Calu3 (cell line): ENCODE measurements at regions of chr3 and their contacts with region 1.

Region 1: DNA sequence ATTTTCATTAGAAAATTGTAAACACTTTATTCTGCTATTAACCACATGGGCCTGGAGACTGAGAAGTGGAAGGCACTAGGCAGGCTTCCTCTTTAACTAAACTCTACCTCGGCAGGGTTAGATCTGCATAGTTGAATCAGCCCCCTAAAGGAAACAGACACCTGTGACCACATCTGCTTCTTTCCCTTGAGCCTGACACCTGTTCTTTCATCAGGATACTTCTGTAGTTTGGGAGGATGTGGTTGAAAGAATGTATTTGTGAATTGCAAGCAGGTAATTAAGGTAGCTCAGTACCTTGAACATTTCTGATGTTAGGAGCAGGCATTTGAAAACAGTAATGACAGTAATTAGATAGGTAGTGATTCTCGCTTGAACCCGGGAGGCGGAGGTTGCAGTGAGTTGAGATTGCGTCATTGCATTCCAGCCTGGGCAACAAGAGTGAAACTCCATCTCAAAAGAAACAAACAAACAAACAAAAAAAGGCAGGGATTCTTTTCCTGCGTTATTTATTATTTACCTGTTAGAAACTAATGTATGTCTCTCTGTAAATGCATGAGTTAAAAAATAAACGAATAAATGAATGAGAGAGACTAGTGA is 468.5 kb downstream of the NLGN1 start:
- DNase-seq: no peak
- H3K4me3 Mint-ChIP-seq: no peak overlapping the region
- H3K27ac Mint-ChIP-seq: no peak overlapping the region
- H3K4me1 Mint-ChIP-seq: no peaks in the 10 kb centered on the region
- H3K27me3 Mint-ChIP-seq: no peaks in the 10 kb centered on the region
- CTCF ChIP-seq: no peak

Region 2: DNA sequence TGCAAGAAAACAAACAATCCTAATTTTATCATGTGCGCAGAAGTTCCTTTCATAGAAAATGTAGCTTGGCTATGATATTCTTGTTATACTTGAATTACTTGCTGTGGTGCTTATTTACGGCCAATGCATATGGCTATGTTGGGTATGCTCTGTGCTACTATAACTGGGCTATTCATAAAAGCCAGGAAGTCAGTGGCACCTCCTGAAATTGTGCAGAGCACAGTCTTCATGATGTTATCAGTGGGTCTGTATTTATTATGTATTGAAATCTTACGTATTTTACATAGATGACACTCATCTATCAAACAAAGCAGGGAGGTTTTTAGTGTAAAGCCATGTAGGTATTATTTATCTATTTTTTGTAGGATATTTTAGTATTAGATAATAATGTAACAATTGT is 796.7 kb after region 1 on chr3:
- CTCF ChIA-PET with region 1: no interaction called
- intact Hi-C with region 1: loop called (anchors 5 kb)
- DNase-seq: no peak
- H3K4me3 Mint-ChIP-seq: no peak overlapping the region
- H3K27ac Mint-ChIP-seq: no peak overlapping the region
- H3K4me1 Mint-ChIP-seq: no peaks in the 10 kb centered on the region
- H3K27me3 Mint-ChIP-seq: no peaks in the 10 kb centered on the region
- CTCF ChIP-seq: no peak